Calu3 (cell line): ENCODE measurements at regions of chr14 and their contacts with region 1.

Region 1: GRCh38 chr14:30656190-30656632 is 34.1 kb downstream of the SCFD1 start:
- DNase-seq: peak; percentile 29
- H3K4me3 Mint-ChIP-seq: no peak overlapping the region
- H3K27ac Mint-ChIP-seq: no peak overlapping the region
- H3K4me1 Mint-ChIP-seq: no peaks in the 10 kb centered on the region
- H3K27me3 Mint-ChIP-seq: no peaks in the 10 kb centered on the region
- CTCF ChIP-seq: peak; percentile 59

Region 2: GRCh38 chr14:30906752-30907658 is 250.8 kb after region 1 on chr14:
- CTCF ChIA-PET with region 1: no interaction called
- intact Hi-C with region 1: loop called (anchors 2 kb)
- DNase-seq: no peak
- H3K4me3 Mint-ChIP-seq: no peak overlapping the region
- H3K27ac Mint-ChIP-seq: no peak overlapping the region
- H3K4me1 Mint-ChIP-seq: no peaks in the 10 kb centered on the region
- H3K27me3 Mint-ChIP-seq: no peaks in the 10 kb centered on the region
- CTCF ChIP-seq: peak; percentile 25